CD14-positive monocyte (primary cell): ENCODE measurements at regions of chr3 and their contacts with region 1.

Region 1: DNA sequence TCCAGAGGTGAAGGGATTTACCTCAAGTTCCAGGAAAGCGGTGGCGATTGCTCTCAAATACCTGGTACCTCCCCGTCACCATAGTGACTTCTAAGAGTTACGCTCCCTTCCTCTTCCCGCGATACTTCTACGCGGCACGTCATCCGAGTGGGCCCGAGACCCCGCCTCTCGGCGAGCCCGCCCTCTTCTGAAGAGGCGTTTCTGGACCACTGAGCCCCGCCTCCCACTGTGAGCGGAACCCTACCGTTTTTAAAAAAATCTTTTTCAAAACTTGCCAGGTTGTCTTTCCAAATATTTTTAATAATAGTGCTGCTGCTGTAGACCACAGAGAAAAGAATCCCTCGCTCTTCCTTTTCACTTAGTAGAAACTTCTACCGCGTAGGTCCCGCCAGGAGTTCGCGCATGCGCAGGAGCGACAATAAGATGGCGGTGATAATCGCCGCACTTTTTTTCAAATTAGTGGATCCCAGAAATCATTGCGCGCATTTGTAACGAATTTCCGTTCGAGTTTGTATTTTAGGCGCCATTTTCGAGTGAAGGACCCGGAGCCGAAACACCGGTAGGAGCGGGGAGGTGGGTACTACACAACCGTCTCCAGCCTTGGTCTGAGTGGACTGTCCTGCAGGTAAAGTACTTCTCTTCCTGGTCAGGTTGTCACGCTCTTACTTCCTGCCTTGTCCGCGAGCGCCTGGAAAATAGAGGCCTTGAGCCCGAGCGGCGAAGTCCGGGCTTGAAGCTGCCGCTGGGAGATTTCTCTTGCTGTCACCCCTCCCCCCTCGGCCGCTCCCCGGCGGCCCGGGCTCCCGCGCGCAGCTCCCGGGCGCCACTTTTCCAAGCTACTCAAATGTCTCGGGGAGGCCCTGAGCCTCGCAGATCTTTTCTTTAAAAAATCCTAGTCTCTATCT is at the starts of genes IFT80 and SMC4:
- DNase-seq: peak; percentile 94
- H3K4me3 ChIP-seq: peak within 1 kb of the TSS; percentile 87 to 99 (median 87)
- H3K4me3 Mint-ChIP-seq: peak within 1 kb of the TSS; percentile 97 to 98
- H3K27ac ChIP-seq: peak within 1 kb of the TSS; percentile 87 to 89
- H3K27ac Mint-ChIP-seq: peak within 1 kb of the TSS; percentile 95 to 99 (median 98)
- H3K4me1 ChIP-seq: peaks cover 17 to 32% of the 10 kb centered on the region in 2 donors
- H3K4me1 Mint-ChIP-seq: peaks cover 42% of the 10 kb centered on the region
- H3K27me3 ChIP-seq: no peaks in the 10 kb centered on the region
- H3K27me3 Mint-ChIP-seq: no peaks in the 10 kb centered on the region
- CTCF ChIP-seq: no peak
- polyA plus RNA-seq, gene IFT80: 1.3 to 7.7 (median 1.4) TPM
- polyA plus RNA-seq, gene SMC4: 6.8 to 17.2 (median 14.1) TPM

Region 2: GRCh38 chr3:160368804-160369203 is 30.6 kb before region 1 on chr3:
- intact Hi-C with region 1: no loop called
- DNase-seq: peak; percentile 23 to 29 (median 27)
- H3K4me3 ChIP-seq: no peak overlapping the region
- H3K4me3 Mint-ChIP-seq: no peak overlapping the region
- H3K27ac ChIP-seq: no peak overlapping the region
- H3K27ac Mint-ChIP-seq: no peak overlapping the region
- H3K4me1 ChIP-seq: no peaks in the 10 kb centered on the region
- H3K4me1 Mint-ChIP-seq: peaks cover 4% of the 10 kb centered on the region
- H3K27me3 ChIP-seq: no peaks in the 10 kb centered on the region
- H3K27me3 Mint-ChIP-seq: peaks cover 0 to 2% (median 0%) of the 10 kb centered on the region in 3 donors
- CTCF ChIP-seq: no peak

Region 3: GRCh38 chr3:160413613-160414248 is 14.4 kb after region 1 on chr3:
- intact Hi-C with region 1: no loop called
- DNase-seq: peak; percentile 65 to 78 (median 74)
- H3K4me3 ChIP-seq: no peak overlapping the region
- H3K4me3 Mint-ChIP-seq: no peak overlapping the region
- H3K27ac ChIP-seq: no peak overlapping the region
- H3K27ac Mint-ChIP-seq: no peak overlapping the region
- H3K4me1 ChIP-seq: no peaks in the 10 kb centered on the region
- H3K4me1 Mint-ChIP-seq: peaks cover 7% of the 10 kb centered on the region
- H3K27me3 ChIP-seq: no peaks in the 10 kb centered on the region
- H3K27me3 Mint-ChIP-seq: no peaks in the 10 kb centered on the region
- CTCF ChIP-seq: peak; percentile 96

Region 4: GRCh38 chr3:160449636-160450598 is 50.5 kb after region 1 on chr3 and contains the start of gene TRIM59:
- intact Hi-C with region 1: loop called in 1 of 2 experiments (anchors 5 kb)
- DNase-seq: peak; percentile 92 to 95 (median 94)
- H3K4me3 ChIP-seq: peak within 1 kb of the TSS; percentile 63 to 83 (median 80)
- H3K4me3 Mint-ChIP-seq: peak within 1 kb of the TSS; percentile 94 to 95
- H3K27ac ChIP-seq: peak within 1 kb of the TSS; percentile 68 to 82
- H3K27ac Mint-ChIP-seq: peak within 1 kb of the TSS; percentile 84 to 95 (median 91)
- H3K4me1 ChIP-seq: peaks cover 16 to 30% of the 10 kb centered on the region in 2 donors
- H3K4me1 Mint-ChIP-seq: peaks cover 26% of the 10 kb centered on the region
- H3K27me3 ChIP-seq: no peaks in the 10 kb centered on the region
- H3K27me3 Mint-ChIP-seq: peaks cover 0 to 9% (median 4%) of the 10 kb centered on the region in 3 donors
- CTCF ChIP-seq: no peak
- polyA plus RNA-seq, gene TRIM59: 2.5 to 4.2 (median 4.2) TPM

Region 5: GRCh38 chr3:160464321-160464720 is 64.9 kb after region 1 on chr3:
- intact Hi-C with region 1: no loop called
- DNase-seq: no peak
- H3K4me3 ChIP-seq: no peak overlapping the region
- H3K4me3 Mint-ChIP-seq: no peak overlapping the region
- H3K27ac ChIP-seq: no peak overlapping the region
- H3K27ac Mint-ChIP-seq: no peak overlapping the region
- H3K4me1 ChIP-seq: no peaks in the 10 kb centered on the region
- H3K4me1 Mint-ChIP-seq: peaks cover 5% of the 10 kb centered on the region
- H3K27me3 ChIP-seq: no peaks in the 10 kb centered on the region
- H3K27me3 Mint-ChIP-seq: peaks cover 0 to 1% (median 0%) of the 10 kb centered on the region in 3 donors
- CTCF ChIP-seq: no peak

Region 6: DNA sequence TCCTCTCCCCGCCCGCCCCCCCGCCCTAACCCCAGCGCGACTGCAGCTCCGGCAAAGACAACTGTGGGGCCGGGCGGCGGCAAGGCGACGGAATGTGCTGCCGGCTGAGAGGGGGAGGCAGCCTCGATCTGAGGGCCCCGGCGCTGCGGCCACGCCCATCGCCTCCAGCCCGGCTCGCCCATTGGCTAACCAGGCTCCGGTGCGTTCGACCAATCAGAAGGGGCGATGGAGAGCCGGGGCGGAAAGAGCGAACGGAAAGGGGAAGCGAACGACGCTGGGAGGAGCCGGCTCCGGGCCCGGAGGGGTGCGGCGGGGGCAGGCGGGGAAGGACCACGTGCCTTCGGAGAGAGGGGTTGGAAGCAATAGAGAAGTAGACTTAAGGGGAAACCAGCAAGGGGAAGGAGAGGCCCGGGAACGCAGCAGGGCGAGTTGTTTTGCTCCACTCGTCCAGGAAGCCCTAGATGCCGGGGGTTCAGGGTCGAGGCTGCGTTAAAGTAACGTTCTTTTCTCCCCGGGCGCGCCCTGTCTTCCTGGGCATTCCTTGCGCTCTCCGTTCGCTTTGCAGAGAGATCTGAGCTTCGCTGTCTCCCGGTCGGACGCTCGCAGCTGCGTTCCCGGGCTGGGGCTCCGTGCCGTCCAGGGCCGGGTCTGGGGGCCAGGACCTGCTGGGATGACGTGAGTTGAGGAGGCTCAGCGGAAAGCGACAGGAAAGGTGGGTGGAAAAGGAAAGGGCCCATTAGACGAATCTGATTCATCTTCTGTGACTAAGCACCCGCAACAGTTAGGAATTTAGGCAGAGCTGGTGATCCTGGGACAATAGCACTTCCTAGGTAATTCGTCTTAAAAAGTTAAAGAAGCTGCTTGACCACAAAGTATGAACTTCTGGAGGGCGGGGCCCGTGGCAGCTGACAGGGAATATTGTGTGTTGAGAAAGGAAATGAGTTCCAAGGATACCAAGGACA is 166.3 kb after region 1 on chr3 and contains the start of gene KPNA4:
- intact Hi-C with region 1: loop called (anchors 5 kb)
- DNase-seq: peak; percentile 97 to 99 (median 98)
- H3K4me3 ChIP-seq: peak within 1 kb of the TSS; percentile 83 to 95 (median 85)
- H3K4me3 Mint-ChIP-seq: peak within 1 kb of the TSS; percentile 97 to 98
- H3K27ac ChIP-seq: peak within 1 kb of the TSS; percentile 93 to 96
- H3K27ac Mint-ChIP-seq: peak within 1 kb of the TSS; percentile 96 to 99 (median 98)
- H3K4me1 ChIP-seq: peaks cover 31 to 62% of the 10 kb centered on the region in 2 donors
- H3K4me1 Mint-ChIP-seq: peaks cover 74% of the 10 kb centered on the region
- H3K27me3 ChIP-seq: no peaks in the 10 kb centered on the region
- H3K27me3 Mint-ChIP-seq: peaks cover 0 to 5% (median 0%) of the 10 kb centered on the region in 3 donors
- CTCF ChIP-seq: no peak
- polyA plus RNA-seq, gene KPNA4: 4.4 to 14.7 (median 4.5) TPM